Common myeloid progenitor, CD34-positive (primary cell): ENCODE measurements at regions of chr19 and their contacts with region 1.

Region 1: GRCh38 chr19:13069415-13070359 is 33.0 kb downstream of the LYL1 start:
- DNase-seq: peak; percentile 84 to 93 (median 86)
- H3K4me3 ChIP-seq: peak overlapping the region in 2 of 7 experiments; percentile 20 to 30
- H3K27ac ChIP-seq: peak overlapping the region in 1 of 2 experiments; percentile 74
- H3K4me1 ChIP-seq: peaks cover 0 to 80% (median 49%) of the 10 kb centered on the region in 4 experiments
- H3K27me3 ChIP-seq: no peaks in the 10 kb centered on the region

Region 2: GRCh38 chr19:13007292-13008045 is 62.2 kb before region 1 on chr19:
- CTCF ChIA-PET with region 1: no interaction called
- POLR2A ChIA-PET with region 1: no interaction called
- DNase-seq: peak in 1 of 3 donors; percentile 28
- H3K4me3 ChIP-seq: no peak overlapping the region
- H3K27ac ChIP-seq: no peak overlapping the region
- H3K4me1 ChIP-seq: peaks cover 0 to 29% (median 15%) of the 10 kb centered on the region in 4 experiments
- H3K27me3 ChIP-seq: peaks cover 0 to 48% (median 25%) of the 10 kb centered on the region in 5 experiments

Region 3: DNA sequence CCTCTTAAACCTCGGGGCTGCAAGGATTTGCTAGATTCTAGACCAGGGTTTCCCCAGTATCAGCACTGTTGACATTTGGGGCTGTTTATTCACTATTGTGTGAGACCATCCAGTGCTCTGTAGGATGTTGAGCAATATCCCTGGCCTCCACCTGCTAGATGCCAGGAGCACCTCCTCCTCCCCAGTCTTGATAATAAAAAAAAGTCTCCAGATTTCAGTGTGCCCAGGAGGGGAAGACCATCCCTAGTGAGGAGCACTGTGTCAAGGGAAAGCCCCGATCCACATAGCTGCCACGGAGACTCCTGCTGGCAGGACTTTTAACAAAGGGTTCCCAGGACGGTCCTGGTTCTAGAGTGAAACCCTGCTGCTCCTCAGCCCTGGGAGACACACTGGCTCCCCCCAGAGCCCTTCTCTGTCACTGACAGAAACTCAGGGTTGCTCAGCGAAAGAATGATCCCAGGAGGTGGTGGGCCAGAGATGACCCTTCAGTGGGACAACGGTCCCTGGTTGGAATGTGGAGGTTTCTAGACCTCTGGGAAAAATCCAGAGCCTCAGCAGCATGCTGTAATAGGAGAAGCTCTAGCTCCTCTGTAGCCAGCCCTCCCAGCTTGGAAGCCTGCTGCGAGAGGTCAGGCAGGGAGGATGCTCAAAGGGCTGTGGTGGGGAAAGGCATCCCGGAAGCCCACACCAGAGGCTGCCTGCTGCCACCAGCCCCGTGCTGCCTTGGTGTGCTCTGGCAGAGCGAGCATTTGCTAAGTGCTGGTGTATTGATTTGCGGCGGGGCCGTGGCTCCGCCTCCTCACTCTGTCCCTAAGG is 12.7 kb after region 1 on chr19:
- CTCF ChIA-PET with region 1: interaction called, 14 read pairs
- POLR2A ChIA-PET with region 1: no interaction called
- DNase-seq: peak in 2 of 3 donors; percentile 41 to 42
- H3K4me3 ChIP-seq: no peak overlapping the region
- H3K27ac ChIP-seq: no peak overlapping the region
- H3K4me1 ChIP-seq: peaks cover 0 to 62% (median 51%) of the 10 kb centered on the region in 4 experiments
- H3K27me3 ChIP-seq: no peaks in the 10 kb centered on the region